ENCODE measurements at regions of chr1 and their contacts with region 1.

Region 1: DNA sequence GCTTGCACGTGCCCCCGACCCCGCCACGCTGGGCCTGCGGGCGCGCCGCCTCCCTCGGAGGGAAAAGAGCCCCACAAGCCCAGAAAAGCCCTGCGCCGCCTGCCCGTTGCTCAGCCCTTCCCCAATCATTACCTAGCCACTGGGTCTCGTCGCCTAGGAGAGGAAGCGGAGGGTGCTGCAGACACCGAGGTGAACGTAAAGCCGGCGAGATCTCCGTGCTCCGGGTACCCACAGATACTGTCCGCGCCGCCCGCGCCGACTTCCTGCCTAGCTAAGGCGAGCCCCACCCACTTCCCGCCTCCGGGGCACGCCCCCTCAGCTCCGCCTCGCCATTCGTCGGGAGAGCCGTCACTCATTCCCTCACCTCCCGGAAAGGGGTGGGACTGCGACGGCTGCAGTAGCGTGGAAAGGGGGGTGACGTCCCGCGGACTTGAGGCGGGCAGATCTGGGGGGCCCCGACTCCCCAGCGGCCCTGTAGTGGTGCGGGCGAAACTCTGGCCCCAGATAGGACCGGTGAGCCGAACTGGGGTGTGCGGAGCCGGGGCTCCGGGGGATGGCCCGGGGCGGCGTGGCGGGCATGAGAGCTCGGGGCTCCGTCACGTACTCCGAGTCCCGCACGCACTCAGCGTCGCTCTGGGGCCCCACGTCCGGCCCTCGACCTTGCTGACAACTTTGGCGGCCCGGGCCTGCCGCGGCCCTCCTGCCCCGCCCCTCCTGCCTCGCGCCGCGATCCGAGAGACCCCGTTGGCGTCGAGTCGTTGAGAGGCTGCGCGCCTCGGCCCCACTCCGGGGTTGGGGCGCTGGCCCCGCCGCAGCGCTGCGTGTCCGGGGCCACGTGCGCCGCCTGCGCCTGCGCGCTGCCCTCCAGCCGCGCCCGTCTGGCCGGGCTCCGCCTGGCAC is at the start of gene ENO1:
- DNase-seq: peak; percentile 96
- H3K4me3 Mint-ChIP-seq: peak within 1 kb of the TSS; percentile 84
- H3K27ac Mint-ChIP-seq: peak within 1 kb of the TSS; percentile 94
- H3K4me1 Mint-ChIP-seq: peaks cover 26% of the 10 kb centered on the region
- H3K27me3 Mint-ChIP-seq: no peaks in the 10 kb centered on the region
- CTCF ChIP-seq: no peak
- total RNA-seq, gene ENO1: 2,592 and 2,811 TPM in 2 replicates

Region 2: DNA sequence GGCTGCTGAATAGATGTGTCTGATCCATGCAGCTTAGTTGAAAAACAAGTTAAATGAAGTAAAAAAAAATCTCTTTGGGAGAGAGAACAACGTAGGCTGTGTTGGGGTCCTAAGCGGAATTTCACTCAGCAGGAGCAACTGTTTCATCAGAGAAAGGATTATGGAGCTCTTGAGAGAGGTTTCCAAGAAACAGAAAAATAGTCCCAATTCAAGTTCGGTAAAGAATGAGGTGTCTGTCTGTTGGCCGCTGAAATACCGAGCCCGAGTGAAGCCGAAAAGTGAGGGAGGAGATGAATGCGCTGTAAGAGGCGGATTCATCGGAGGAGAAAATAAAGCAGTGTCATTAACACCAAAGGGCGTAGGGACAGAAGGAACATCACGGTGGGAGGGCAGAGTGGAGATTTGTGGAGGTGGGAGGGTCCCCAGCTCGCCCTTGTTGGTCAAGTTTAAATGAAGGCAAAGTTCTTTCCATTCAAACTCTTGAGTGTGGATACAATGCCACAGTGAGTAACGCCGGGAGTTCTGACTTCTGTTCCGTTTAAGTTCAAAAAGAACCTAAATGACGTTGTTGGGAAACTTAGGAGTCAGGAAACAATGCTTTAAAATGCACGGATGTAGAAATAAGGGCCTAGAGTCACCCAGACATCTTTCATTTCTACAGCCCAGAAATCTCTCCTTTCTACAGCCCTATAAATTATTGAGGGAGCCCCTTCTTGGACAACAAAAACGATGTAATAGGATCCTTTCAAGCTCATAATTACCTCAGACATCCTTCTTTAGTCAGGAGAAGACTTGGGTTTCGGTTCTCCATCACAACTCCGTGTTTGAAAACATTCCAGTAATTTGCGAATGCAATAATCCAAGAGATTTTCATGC is 576.4 kb before region 1 on chr1:
- CTCF ChIA-PET with region 1: no interaction called
- POLR2A ChIA-PET with region 1: no interaction called
- intact Hi-C with region 1: no loop called
- DNase-seq: no peak
- H3K4me3 Mint-ChIP-seq: no peak overlapping the region
- H3K27ac Mint-ChIP-seq: no peak overlapping the region
- H3K4me1 Mint-ChIP-seq: no peaks in the 10 kb centered on the region
- H3K27me3 Mint-ChIP-seq: no peaks in the 10 kb centered on the region
- CTCF ChIP-seq: no peak

Region 3: DNA sequence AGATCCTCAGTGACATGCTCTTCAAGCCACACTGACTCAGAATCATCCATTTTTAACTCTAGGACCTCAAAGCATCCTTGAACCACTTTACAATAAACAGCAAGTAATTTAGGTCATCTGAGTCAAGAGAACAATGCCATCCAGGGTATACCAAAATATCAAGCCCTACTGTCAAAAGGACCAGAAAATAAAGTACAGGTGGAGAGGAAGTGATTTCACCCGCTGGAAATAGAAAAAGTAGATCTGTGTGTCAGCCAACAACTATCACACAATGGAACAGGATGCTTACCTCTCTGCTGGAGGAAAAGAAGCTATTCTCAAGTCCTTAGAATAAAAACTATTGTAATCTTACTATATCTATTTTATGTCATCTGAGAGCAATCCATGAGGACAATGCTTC is 98.3 kb before region 1 on chr1:
- CTCF ChIA-PET with region 1: no interaction called
- POLR2A ChIA-PET with region 1: no interaction called
- intact Hi-C with region 1: no loop called
- DNase-seq: no peak
- H3K4me3 Mint-ChIP-seq: no peak overlapping the region
- H3K27ac Mint-ChIP-seq: no peak overlapping the region
- H3K4me1 Mint-ChIP-seq: peaks cover 9% of the 10 kb centered on the region
- H3K27me3 Mint-ChIP-seq: no peaks in the 10 kb centered on the region
- CTCF ChIP-seq: no peak

Region 4: DNA sequence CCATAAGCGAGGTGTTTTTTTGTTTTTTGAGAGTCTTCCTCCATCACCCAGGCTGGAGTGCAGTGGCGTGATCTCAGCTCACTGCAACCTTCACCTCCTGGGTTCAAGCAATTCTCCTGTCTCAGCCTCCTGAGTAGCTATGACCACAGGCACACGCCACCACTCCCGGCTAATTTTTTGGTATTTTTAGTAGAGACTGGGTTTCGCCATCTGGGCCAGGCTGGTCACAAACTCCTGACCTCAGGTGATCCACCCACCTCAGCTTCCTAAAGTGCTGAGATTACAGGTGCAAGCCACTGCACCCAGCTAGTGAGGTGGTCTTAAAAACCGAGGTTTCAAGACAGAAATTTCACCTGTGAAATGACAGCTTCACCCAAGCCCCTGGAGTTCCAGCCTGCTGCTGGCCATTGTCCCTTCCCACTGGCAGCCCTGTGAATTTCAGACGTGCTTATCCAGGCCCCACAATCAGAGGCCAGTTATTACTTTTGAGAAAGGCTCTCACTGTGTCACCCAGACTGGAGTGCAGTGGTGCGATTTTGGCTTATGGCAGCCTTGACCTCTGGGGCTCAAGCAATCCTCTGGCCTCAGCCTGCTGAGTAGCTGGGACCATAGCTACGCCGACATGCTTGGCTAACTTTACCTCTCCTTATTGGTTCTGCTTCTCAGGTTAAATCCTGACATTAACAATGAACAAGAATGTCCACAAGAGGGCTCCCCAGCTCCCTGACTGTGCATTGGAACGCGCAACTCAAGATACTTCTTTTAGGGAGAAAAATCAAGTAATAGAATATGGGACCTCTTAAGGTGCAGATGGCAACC is 19.6 kb before region 1 on chr1:
- CTCF ChIA-PET with region 1: interaction called, 4 read pairs
- POLR2A ChIA-PET with region 1: interaction called, 103 read pairs
- intact Hi-C with region 1: no loop called
- DNase-seq: peak; percentile 65
- H3K4me3 Mint-ChIP-seq: no peak overlapping the region
- H3K27ac Mint-ChIP-seq: peak overlapping the region; percentile 66
- H3K4me1 Mint-ChIP-seq: no peaks in the 10 kb centered on the region
- H3K27me3 Mint-ChIP-seq: no peaks in the 10 kb centered on the region
- CTCF ChIP-seq: peak; percentile 45

Region 5: DNA sequence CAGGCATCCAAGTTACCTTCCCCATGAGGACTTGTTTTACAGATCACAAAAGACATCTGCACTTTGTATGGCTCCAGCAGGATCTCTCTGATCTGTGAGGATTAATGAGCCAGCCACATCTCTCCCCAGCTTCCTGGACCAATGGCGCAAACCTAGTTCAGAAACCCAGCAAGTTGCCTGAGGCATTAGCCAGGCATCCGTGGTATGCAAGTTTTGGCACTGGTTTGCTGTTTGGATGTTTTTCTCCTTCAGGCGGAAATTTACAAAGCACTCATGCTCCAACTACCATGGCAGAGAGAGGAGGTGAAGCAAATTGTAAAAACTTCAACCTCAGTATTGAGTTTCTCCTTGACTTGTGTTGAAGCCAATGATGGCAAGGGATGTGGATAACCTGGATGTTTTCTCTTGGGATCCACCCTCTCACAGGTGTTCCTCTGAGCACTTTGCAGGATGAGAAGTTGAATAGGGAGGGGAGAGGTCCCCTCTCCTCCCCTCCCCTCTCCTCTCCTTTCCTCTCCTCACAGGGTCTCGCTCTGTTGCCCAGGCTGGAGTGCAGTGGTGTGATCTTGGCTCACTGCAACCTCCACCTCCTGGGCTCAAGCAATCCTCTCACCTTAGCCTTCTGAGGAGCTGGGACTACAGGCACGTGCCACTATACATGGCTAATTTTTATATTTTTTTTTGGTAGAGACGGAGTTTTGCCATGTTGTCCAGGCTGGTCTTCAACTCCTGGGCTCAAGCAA is 25.4 kb after region 1 on chr1:
- CTCF ChIA-PET with region 1: no interaction called
- POLR2A ChIA-PET with region 1: interaction called, 125 read pairs
- intact Hi-C with region 1: loop called (anchors 1 kb)
- DNase-seq: peak; percentile 98
- H3K4me3 Mint-ChIP-seq: peak overlapping the region; percentile 21
- H3K27ac Mint-ChIP-seq: no peak overlapping the region
- H3K4me1 Mint-ChIP-seq: peaks cover 41% of the 10 kb centered on the region
- H3K27me3 Mint-ChIP-seq: no peaks in the 10 kb centered on the region
- CTCF ChIP-seq: no peak

Region 6: DNA sequence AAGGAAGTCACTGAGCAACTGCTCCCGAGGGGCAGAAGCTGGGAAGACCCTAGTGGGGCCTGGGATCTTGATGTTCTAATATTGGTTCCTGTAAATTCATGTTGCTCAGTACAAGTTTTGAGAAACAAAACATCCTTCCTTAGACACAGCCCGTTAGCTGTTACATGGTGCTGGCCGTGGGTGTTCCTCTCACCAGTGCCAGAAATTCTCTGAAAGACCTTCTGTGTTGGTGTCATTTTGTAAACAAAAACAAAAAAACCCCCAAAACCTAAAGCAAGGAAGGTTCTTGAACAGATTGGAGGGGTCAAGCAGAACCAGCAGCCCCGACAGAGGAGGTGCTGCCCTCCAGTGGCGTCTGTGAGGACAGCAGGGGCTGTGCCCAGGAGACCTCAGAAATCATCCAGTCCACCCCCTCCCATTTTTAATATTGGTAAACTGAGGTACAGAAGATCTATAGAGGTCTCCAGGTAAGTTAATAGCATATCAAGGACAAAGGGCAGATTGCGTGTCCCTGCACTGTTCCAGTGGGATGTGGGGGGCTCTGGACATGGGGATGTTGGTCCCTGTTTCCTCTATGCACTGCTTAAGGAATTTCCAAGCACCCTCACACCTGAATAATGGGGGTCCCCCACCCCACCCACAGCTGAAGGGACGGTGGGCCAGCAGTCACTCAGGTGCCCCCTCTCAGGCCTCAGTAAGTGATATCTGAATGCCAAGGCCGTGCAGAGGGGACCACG is 109.4 kb after region 1 on chr1:
- CTCF ChIA-PET with region 1: interaction called, 4 read pairs
- POLR2A ChIA-PET with region 1: interaction called, 10 read pairs
- intact Hi-C with region 1: loop called (anchors 5 kb)
- DNase-seq: peak; percentile 59
- H3K4me3 Mint-ChIP-seq: no peak overlapping the region
- H3K27ac Mint-ChIP-seq: no peak overlapping the region
- H3K4me1 Mint-ChIP-seq: peaks cover 12% of the 10 kb centered on the region
- H3K27me3 Mint-ChIP-seq: no peaks in the 10 kb centered on the region
- CTCF ChIP-seq: peak; percentile 94

Region 7: DNA sequence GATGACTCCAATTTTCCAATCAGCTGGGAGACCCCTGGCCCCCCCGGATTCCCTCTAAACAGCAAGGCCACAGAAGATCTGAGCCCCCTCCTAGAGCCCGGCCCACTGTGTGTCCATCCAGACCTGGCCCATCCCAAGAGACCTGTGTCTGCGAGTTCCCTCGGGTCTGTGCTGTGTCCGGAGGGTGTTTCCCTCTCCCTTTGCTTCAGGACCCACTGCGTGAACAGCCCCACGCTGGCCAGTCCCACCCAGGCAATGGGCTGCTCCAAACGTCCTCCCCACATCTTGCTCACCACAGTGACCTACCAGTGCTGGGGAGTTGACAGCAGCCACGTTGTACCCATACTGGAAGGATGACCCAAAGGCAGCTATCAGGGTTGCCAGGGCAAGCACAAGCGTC is 179.1 kb after region 1 on chr1:
- CTCF ChIA-PET with region 1: no interaction called
- POLR2A ChIA-PET with region 1: no interaction called
- intact Hi-C with region 1: no loop called
- DNase-seq: no peak
- H3K4me3 Mint-ChIP-seq: no peak overlapping the region
- H3K27ac Mint-ChIP-seq: no peak overlapping the region
- H3K4me1 Mint-ChIP-seq: peaks cover 11% of the 10 kb centered on the region
- H3K27me3 Mint-ChIP-seq: no peaks in the 10 kb centered on the region
- CTCF ChIP-seq: no peak

Region 8: DNA sequence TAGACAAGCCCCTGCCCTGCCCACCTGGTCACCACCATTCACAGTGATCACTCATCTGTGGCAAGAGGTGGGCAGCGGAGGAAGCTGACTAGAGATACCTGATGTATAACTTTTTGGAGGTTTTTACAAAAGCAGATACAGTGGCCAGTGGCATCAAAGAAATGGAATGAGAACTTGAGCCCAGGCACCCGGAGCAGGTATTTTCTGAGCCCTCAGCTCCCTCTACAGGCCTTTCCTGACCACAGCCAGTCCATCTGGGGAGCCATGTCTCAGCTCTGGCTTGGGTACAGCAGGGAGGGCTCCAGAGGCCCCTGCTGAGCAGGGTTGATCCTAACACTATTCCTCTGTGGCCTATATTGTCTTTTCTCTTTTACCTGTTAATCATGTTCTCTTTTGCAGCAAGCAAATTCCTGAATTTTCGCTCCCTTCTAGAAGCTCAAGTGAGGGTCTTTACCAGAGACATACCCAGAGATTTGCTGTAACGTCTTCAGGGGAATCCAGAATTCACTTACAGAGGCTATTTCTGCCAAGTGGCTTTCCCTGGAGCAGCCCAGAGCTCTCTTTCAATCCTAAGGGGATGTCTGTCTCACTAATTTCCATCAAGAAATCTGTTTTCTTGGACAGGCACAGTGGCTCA is 222.9 kb after region 1 on chr1:
- CTCF ChIA-PET with region 1: no interaction called
- POLR2A ChIA-PET with region 1: interaction called, 4 read pairs
- intact Hi-C with region 1: loop called (anchors 5 kb)
- DNase-seq: peak; percentile 65
- H3K4me3 Mint-ChIP-seq: no peak overlapping the region
- H3K27ac Mint-ChIP-seq: no peak overlapping the region
- H3K4me1 Mint-ChIP-seq: no peaks in the 10 kb centered on the region
- H3K27me3 Mint-ChIP-seq: no peaks in the 10 kb centered on the region
- CTCF ChIP-seq: peak; percentile 57